GM12878 (cell line): ENCODE measurements at regions of chr2 and their contacts with region 1.

Region 1: GRCh38 chr2:25388491-25388890 is 46.8 kb upstream of the DNMT3A start:
- DNase-seq: no peak
- ATAC-seq: peak; percentile 86
- H3K4me3 ChIP-seq: no peak overlapping the region
- H3K27ac ChIP-seq: no peak overlapping the region
- H3K4me1 ChIP-seq: peaks cover 12% of the 10 kb centered on the region
- H3K27me3 ChIP-seq: no peaks in the 10 kb centered on the region
- CTCF ChIP-seq: no peak
- EP300 ChIP-seq: no peak
- POLR2A ChIP-seq: no peak
- RAD21 ChIP-seq: no peak

Region 2: DNA sequence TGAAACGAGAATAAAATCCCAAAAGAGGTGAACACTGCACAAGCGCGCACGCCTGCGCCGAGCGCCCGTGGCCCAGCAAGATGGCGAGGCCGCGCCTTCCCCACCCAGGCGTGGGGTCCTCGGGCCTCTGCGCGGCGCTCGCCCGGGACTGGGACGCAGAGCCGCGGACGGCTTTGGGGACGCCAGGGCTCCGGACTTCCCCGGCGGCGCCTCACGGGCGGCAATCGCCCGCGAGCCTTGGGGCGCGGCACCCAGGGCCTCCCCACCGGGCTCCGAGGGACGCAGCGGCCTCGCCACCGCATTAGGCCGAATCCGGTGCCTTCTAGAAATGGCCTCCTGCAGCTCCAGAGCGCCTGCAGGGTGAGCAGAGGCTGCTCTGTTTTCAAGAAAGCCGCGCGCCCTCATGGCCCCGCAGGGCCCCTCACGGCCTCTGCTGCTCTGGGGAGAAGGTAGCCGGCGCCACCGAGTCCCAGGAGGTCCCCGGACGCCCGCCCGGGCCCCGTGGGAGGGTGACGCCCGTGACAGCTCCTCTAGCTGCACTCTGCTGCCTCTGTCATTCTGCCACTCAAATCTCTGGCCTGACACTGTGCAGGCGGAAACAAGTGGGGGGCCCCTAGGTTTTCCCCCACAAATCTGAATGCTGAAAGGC is 184.2 kb before region 1 on chr2:
- CTCF ChIA-PET with region 1: no interaction called
- POLR2A ChIA-PET with region 1: no interaction called
- RAD21 ChIA-PET with region 1: no interaction called
- SMC1A ChIA-PET with region 1: no interaction called
- in situ Hi-C with region 1: no loop called
- intact Hi-C with region 1: no loop called
- DNase-seq: no peak
- ATAC-seq: peak; percentile 69
- H3K4me3 ChIP-seq: 0 out of 2 replicates have a peak overlapping the region, but pooled peaks have one; percentile 32
- H3K27ac ChIP-seq: peak overlapping the region; percentile 31
- H3K4me1 ChIP-seq: peaks cover 25% of the 10 kb centered on the region
- H3K27me3 ChIP-seq: no peaks in the 10 kb centered on the region
- CTCF ChIP-seq: no peak
- EP300 ChIP-seq: no peak
- POLR2A ChIP-seq: 0 out of 2 replicates have a peak, but pooled peaks have one; percentile 19
- RAD21 ChIP-seq: no peak

Region 3: GRCh38 chr2:25354116-25354515 is 34.4 kb before region 1 on chr2:
- CTCF ChIA-PET with region 1: no interaction called
- POLR2A ChIA-PET with region 1: no interaction called
- RAD21 ChIA-PET with region 1: no interaction called
- SMC1A ChIA-PET with region 1: no interaction called
- in situ Hi-C with region 1: no loop called
- intact Hi-C with region 1: no loop called
- DNase-seq: no peak
- ATAC-seq: no peak
- H3K4me3 ChIP-seq: no peak overlapping the region
- H3K27ac ChIP-seq: no peak overlapping the region
- H3K4me1 ChIP-seq: peaks cover 11% of the 10 kb centered on the region
- H3K27me3 ChIP-seq: peaks cover 1 to 2% of the 10 kb centered on the region in 2 experiments; a peak in 1 of 4 replicates
- CTCF ChIP-seq: no peak
- EP300 ChIP-seq: no peak
- POLR2A ChIP-seq: no peak
- RAD21 ChIP-seq: no peak

Region 4: GRCh38 chr2:25402477-25402876 is 14.0 kb after region 1 on chr2:
- CTCF ChIA-PET with region 1: interaction called, 4 read pairs
- POLR2A ChIA-PET with region 1: interaction called, 10 read pairs
- RAD21 ChIA-PET with region 1: no interaction called
- SMC1A ChIA-PET with region 1: interaction called, 92 read pairs
- in situ Hi-C with region 1: no loop called
- intact Hi-C with region 1: no loop called
- DNase-seq: no peak
- ATAC-seq: peak; percentile 57
- H3K4me3 ChIP-seq: peak overlapping the region; percentile 35; the same call in 1 of the 2 replicates
- H3K27ac ChIP-seq: peak overlapping the region; percentile 97
- H3K4me1 ChIP-seq: peaks cover 58% of the 10 kb centered on the region
- H3K27me3 ChIP-seq: no peaks in the 10 kb centered on the region
- CTCF ChIP-seq: no peak
- EP300 ChIP-seq: peak in 1 of 2 experiments; percentile 74; a peak in 2 of 4 replicates
- POLR2A ChIP-seq: peak; percentile 32; the same call in 1 of the 2 replicates
- RAD21 ChIP-seq: no peak